H1 (cell line): ENCODE measurements at regions of chr10 and their contacts with region 1.

Region 1: DNA sequence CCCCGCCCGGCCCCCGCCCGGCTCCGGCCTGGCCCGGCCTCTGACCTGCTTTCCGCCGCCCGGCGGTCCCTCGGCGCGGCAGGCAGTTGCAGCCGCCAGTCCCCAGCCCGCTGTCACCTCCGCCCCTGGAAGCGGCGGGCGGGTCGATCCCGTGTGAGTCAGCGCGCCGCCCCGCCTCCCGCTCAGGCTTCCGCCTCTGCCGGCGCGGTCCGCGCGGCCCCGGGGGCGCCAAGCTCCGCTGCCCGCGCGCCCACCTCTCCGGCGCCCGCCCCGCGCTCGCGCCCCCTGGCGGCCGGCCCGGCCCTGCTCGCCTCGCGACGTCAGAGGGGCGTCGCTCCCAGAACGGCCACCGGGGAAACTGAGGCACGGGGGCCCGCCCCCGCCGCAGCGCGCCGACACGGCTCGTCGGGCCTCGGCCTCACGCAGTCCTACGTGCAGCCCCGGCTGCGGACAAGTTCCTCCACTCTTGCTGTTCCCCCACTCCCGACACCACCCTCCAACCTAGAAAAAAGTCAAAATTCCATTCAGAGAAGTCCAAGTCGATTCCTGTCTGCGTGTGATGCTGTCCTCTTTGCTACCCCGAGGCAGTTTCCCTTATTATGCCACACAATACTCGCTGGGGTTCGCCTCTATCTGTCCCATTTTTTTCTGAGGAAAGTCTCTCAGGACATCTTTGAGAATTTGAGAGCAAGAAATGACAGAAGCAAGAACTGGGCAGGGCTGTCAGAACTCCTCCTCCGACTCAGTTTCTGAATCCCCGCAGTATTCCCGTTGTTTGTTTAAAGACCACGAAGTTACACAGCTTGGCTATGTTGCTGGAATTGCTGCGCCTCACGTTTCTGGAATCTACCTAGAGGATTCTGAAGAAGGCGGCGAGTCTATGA is at the start of gene DNMBP:
- DNase-seq: peak in 1 of 2 experiments; percentile 92
- H3K4me3 ChIP-seq: peak within 1 kb of the TSS; percentile 50 to 80 (median 76)
- H3K27ac ChIP-seq: no peak within 1 kb of the TSS
- H3K4me1 ChIP-seq: peaks cover 4 to 11% (median 6%) of the 10 kb centered on the region in 4 experiments; a peak in 5 of 7 replicates
- H3K27me3 ChIP-seq: no peaks in the 10 kb centered on the region; a peak in 2 of 7 replicates
- CTCF ChIP-seq: peak; percentile 65 to 85 (median 75)
- EP300 ChIP-seq: no peak
- POLR2A ChIP-seq: no peak
- RAD21 ChIP-seq: peak; percentile 20 to 63; a peak in 3 of 4 replicates
- total RNA-seq, gene DNMBP: 26.4 and 26.7 TPM in 2 replicates

Region 2: GRCh38 chr10:99917963-99918825 is 91.8 kb before region 1 on chr10:
- CTCF ChIA-PET with region 1: interaction called, 11 read pairs
- POLR2A ChIA-PET with region 1: interaction called, 7 read pairs
- DNase-seq: peak; percentile 34 to 75
- H3K4me3 ChIP-seq: peak overlapping the region; percentile 45 to 67 (median 50)
- H3K27ac ChIP-seq: peak overlapping the region; percentile 94
- H3K4me1 ChIP-seq: peaks cover 4 to 12% (median 9%) of the 10 kb centered on the region in 4 experiments; a peak in 6 of 7 replicates
- H3K27me3 ChIP-seq: no peaks in the 10 kb centered on the region
- CTCF ChIP-seq: no peak
- EP300 ChIP-seq: peak in 1 of 2 experiments; percentile 56; a peak in 1 of 3 replicates
- POLR2A ChIP-seq: peak in 1 of 2 experiments; percentile 76; a peak in 1 of 3 replicates
- RAD21 ChIP-seq: 0 out of 4 replicates have a peak, but pooled peaks of 1 of the 2 experiments have one; percentile 13

Region 3: DNA sequence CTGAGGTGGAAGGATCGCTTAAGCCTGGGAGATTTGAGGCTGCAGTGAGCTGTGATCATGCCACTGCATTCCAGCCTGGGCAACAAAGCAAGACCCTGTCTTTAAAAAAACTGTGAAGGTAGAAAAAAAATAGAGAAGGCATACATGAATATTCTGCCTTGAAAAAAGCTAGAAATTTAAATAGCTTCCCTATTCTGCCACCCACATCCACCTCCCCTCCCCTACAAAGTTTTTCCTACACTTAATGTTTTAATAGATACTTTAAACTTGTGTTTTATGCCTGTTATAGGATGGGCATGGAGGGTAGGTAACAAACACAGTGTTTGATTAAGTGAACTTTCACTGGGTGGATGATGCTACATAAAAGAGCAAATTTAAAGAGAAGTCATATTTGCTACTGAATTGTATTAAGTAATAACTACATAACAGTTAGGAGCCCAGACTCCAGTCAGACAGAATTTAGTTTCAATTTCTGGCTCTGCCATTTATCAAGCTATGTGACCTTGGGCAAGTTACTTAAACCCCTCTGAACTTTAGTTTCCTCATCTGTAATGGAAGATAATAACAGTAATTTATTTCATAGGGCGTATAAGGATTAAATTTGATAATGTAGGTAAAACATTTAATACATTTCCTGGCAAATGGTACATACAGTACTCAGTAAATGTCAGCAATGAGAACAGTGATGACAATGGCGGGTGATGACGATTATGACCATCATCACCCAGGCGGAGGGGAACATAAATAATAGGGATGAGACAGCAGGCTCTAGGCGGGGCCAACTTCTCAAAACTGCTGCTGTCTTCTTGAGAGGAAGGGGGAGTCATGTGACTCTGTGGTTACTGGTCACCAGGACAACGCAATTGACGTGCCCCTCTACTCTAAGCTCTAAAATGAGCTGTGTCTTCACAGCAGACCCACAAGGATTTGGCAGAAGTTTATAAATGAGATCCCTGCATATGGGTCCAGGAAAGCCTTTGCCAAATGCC is 16.0 kb before region 1 on chr10:
- CTCF ChIA-PET with region 1: interaction called, 57 read pairs
- POLR2A ChIA-PET with region 1: interaction called, 4 read pairs
- DNase-seq: no peak
- H3K4me3 ChIP-seq: no peak overlapping the region
- H3K27ac ChIP-seq: no peak overlapping the region
- H3K4me1 ChIP-seq: no peaks in the 10 kb centered on the region; a peak in 1 of 7 replicates
- H3K27me3 ChIP-seq: no peaks in the 10 kb centered on the region
- CTCF ChIP-seq: no peak
- EP300 ChIP-seq: no peak
- POLR2A ChIP-seq: no peak
- RAD21 ChIP-seq: no peak

Region 4: DNA sequence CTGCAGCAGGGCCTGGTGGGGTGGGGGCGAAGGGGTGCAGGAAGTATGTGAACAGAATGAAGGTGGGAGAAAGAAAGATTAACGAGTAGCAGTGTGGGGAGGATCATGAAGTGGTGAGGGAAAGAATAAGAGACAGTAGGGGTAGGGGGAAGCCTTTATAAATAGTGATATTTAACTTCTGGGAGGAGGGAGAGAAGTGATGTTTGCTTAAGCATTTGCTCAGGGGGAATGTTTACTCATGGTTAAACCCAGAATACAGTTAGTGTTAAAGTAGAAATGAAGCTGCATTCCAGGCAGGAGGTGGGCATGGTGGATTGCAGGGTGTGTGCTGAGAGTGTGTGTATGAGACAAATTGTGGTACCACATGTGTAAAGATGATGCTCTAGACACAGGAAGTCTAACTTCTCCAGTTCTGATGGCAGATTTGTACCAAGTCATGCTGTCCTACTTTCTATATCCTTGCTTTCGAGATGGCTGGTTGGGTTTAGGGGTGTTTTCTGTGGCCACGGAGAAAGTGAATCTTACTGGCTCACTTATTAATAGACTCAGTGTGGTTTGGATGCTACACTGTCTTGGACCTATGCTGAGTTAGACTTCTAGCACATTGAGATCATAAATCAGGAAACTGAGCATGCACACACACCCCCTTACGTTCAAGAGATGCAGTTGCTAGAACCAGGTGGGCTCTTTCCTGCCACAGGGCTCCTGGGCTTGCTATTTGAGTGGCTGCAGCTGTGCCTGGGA is 10.3 kb after region 1 on chr10:
- CTCF ChIA-PET with region 1: interaction called, 33 read pairs
- POLR2A ChIA-PET with region 1: interaction called, 8 read pairs
- DNase-seq: no peak
- H3K4me3 ChIP-seq: no peak overlapping the region
- H3K27ac ChIP-seq: no peak overlapping the region
- H3K4me1 ChIP-seq: peaks cover 0 to 7% (median 1%) of the 10 kb centered on the region in 4 experiments; a peak in 5 of 7 replicates
- H3K27me3 ChIP-seq: no peaks in the 10 kb centered on the region
- CTCF ChIP-seq: no peak
- EP300 ChIP-seq: no peak
- POLR2A ChIP-seq: no peak
- RAD21 ChIP-seq: no peak